ENCODE measurements at regions of chr14 and their contacts with region 1.

Region 1: DNA sequence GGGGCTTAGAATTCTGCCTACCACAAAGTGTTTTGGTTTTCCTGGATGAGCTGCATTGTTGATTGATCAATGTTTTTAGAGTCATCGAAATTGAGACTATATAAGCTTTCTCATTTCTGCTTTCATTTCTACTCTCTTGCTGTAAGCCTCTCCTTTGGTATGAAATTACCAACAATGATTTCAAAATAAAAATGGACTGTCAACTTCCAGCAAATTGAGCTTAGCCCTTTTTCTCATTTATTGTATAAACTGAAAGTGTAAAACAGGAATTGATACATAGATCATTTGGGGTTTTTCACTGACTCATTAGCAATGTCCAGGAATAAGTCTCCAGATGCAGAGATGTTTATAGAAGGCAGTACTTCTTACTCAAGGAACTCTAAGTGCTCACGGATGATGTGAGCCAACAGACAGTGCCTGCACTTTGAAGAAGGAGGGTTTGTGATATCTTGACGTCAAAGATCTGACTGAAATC is 20.0 kb upstream of the PCNX1 start:
- DNase-seq: no peak
- H3K4me3 Mint-ChIP-seq: peak overlapping the region; percentile 68
- H3K27ac Mint-ChIP-seq: peak overlapping the region; percentile 96
- H3K4me1 Mint-ChIP-seq: peaks cover 93% of the 10 kb centered on the region
- H3K27me3 Mint-ChIP-seq: no peaks in the 10 kb centered on the region

Region 2: DNA sequence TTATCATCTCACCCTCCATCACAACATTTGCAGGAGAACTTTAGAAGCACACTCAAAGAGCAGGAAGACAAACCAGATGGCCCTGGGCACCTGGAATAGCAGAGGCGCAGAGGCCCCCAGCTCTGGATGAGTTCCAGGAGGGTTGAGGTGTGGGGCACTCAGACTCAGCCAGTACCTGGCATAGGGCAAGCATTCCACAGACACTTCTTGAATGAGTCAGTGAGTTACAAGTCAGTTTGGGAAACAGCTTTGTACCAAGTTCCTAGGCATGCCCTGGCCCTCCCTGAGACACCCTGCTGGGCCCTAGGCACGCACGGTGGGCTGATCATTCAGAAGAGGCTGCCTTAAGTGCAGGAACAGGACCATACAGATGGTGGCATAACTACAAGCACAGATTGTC is 132.3 kb before region 1 on chr14:
- intact Hi-C with region 1: no loop called
- DNase-seq: no peak
- H3K4me3 Mint-ChIP-seq: no peak overlapping the region
- H3K27ac Mint-ChIP-seq: no peak overlapping the region
- H3K4me1 Mint-ChIP-seq: no peaks in the 10 kb centered on the region
- H3K27me3 Mint-ChIP-seq: no peaks in the 10 kb centered on the region

Region 3: DNA sequence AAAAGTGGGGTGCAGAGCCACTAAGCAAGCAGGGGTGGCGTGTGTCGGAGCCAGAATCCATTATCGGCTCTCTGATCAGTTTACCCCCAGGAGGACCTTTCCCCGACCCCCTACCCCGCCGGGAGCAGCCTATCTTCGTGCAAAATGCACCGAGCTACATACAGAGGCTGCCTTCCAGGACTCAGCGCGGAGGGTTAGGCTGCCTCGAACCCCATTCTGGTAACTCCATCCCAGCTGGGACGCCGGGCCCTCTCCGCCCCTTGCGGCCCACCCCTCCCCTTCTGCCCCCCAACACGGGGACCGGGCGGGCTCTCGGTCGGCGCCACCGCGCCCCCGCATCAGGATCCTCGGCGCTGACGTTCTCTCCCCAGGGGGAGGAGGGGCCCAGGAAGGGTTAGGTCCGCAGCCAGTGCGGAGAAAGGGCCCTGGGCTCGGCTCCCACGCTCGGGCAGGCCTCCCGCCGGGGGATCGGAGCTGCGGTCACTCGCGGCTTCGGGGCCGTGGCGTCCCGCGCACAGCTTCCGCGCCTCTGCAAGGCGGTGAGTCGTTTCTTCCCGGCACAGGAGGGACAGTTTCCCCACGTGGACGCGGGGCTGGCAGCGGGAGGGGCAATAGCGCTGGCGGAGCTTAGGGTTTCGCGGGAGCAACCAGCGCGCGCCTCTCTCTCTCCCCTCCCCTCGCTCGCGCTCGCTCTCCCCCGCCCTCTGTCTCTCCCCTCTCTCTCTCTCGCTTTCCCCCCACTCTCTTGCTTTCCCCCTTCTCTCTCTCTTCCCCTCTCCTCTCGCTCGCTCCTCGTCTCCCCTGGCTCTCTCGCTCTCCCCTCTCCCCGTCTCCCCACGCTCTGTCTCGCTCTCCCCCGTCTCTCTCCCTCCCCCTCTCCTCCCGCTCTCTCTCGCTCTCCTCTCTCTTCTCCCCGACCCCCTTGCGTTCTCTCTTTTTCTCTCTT is 65.4 kb before region 1 on chr14:
- intact Hi-C with region 1: loop called (anchors 2 kb)
- DNase-seq: peak; percentile 43
- H3K4me3 Mint-ChIP-seq: peak overlapping the region; percentile 84
- H3K27ac Mint-ChIP-seq: peak overlapping the region; percentile 68
- H3K4me1 Mint-ChIP-seq: peaks cover 29% of the 10 kb centered on the region
- H3K27me3 Mint-ChIP-seq: peaks cover 21% of the 10 kb centered on the region

Region 4: DNA sequence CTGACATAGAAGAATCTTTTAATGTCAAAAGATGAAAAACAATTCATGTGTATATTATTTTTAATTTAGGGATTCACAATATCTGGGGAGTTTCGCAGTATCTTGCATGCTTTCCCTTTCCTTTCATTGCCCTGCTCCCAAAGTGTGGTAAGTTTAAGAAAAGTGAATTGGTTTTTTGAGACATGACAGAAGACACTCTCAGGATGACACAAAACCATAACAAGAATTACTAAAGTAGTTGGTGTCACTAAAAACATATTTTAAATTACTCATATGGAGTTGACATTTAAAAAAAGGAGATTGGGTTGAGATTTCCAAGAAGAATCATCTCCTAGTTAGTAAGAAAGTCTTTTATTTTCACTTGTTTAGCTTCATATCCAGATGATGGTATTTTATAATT is 14.9 kb after region 1 on chr14:
- intact Hi-C with region 1: loop called (anchors 1 kb)
- DNase-seq: no peak
- H3K4me3 Mint-ChIP-seq: no peak overlapping the region
- H3K27ac Mint-ChIP-seq: peak overlapping the region; percentile 53
- H3K4me1 Mint-ChIP-seq: peaks cover 62% of the 10 kb centered on the region
- H3K27me3 Mint-ChIP-seq: no peaks in the 10 kb centered on the region

Region 5: GRCh38 chr14:70955543-70956480 is 68.6 kb after region 1 on chr14:
- intact Hi-C with region 1: loop called (anchors 2 kb)
- DNase-seq: no peak
- H3K4me3 Mint-ChIP-seq: no peak overlapping the region
- H3K27ac Mint-ChIP-seq: no peak overlapping the region
- H3K4me1 Mint-ChIP-seq: peaks cover 30% of the 10 kb centered on the region
- H3K27me3 Mint-ChIP-seq: no peaks in the 10 kb centered on the region

Region 6: GRCh38 chr14:71221119-71221518 is 333.9 kb after region 1 on chr14:
- intact Hi-C with region 1: loop called (anchors 2 kb)
- DNase-seq: no peak
- H3K4me3 Mint-ChIP-seq: no peak overlapping the region
- H3K27ac Mint-ChIP-seq: no peak overlapping the region
- H3K4me1 Mint-ChIP-seq: peaks cover 24% of the 10 kb centered on the region
- H3K27me3 Mint-ChIP-seq: no peaks in the 10 kb centered on the region